Panc1 (cell line): ENCODE measurements at regions of chr1 and their contacts with region 1.

Region 1: GRCh38 chr1:7902478-7903085 is 38.1 kb downstream of the TNFRSF9 start:
- DNase-seq: peak; percentile 66
- ATAC-seq: peak; percentile 97
- H3K4me3 ChIP-seq: peak overlapping the region; percentile 24 to 56
- H3K27ac ChIP-seq: no peak overlapping the region
- H3K4me1 ChIP-seq: no peaks in the 10 kb centered on the region
- H3K27me3 ChIP-seq: no peaks in the 10 kb centered on the region
- CTCF ChIP-seq: peak; percentile 87

Region 2: DNA sequence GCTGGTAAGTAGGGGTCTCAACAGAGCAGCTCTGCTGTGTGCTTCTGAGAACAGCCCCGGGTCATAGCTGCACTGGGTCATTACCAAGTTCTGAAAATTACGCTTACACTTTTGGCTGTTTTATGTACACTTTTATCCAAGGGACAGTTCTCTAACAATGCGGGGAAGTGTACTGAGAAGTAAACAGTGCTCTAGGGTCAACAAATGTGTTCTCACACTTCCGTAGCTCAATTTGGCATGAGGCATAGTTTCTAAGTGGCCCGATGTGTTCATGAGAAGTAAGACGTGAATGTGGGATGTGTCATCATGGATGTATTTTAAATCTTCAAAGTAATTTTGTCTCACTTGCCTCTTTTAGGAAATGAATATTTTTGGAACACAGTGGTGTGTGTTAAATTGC is 142.3 kb before region 1 on chr1:
- CTCF ChIA-PET with region 1: no interaction called
- POLR2A ChIA-PET with region 1: no interaction called
- in situ Hi-C with region 1: no loop called
- intact Hi-C with region 1: no loop called
- DNase-seq: no peak
- ATAC-seq: no peak
- H3K4me3 ChIP-seq: no peak overlapping the region
- H3K27ac ChIP-seq: no peak overlapping the region
- H3K4me1 ChIP-seq: no peaks in the 10 kb centered on the region
- H3K27me3 ChIP-seq: no peaks in the 10 kb centered on the region
- CTCF ChIP-seq: no peak

Region 3: GRCh38 chr1:7808253-7808844 is 94.2 kb before region 1 on chr1:
- CTCF ChIA-PET with region 1: no interaction called
- POLR2A ChIA-PET with region 1: no interaction called
- in situ Hi-C with region 1: no loop called
- intact Hi-C with region 1: loop called (anchors 5 kb)
- DNase-seq: no peak
- ATAC-seq: peak; percentile 81
- H3K4me3 ChIP-seq: no peak overlapping the region
- H3K27ac ChIP-seq: no peak overlapping the region
- H3K4me1 ChIP-seq: no peaks in the 10 kb centered on the region
- H3K27me3 ChIP-seq: no peaks in the 10 kb centered on the region
- CTCF ChIP-seq: peak; percentile 67; the same call in 1 of the 2 replicates

Region 4: GRCh38 chr1:7961216-7962015 is 58.8 kb after region 1 on chr1 and contains the start of gene PARK7:
- CTCF ChIA-PET with region 1: no interaction called
- POLR2A ChIA-PET with region 1: interaction called, 12 read pairs
- in situ Hi-C with region 1: no loop called
- intact Hi-C with region 1: no loop called
- DNase-seq: peak; percentile 97
- ATAC-seq: peak; percentile 98
- H3K4me3 ChIP-seq: peak within 1 kb of the TSS; percentile 87 to 96
- H3K27ac ChIP-seq: peak within 1 kb of the TSS; percentile 99
- H3K4me1 ChIP-seq: peaks cover 19% of the 10 kb centered on the region
- H3K27me3 ChIP-seq: no peaks in the 10 kb centered on the region
- CTCF ChIP-seq: no peak; the same call in 1 of the 2 replicates
- total RNA-seq, gene PARK7: 448 TPM

Region 5: GRCh38 chr1:8259498-8260290 is 357.1 kb after region 1 on chr1:
- CTCF ChIA-PET with region 1: no interaction called
- POLR2A ChIA-PET with region 1: no interaction called
- in situ Hi-C with region 1: no loop called
- intact Hi-C with region 1: no loop called
- DNase-seq: peak; percentile 81
- ATAC-seq: peak; percentile 85
- H3K4me3 ChIP-seq: peak overlapping the region; percentile 4 to 25; a peak in 3 of 4 replicates
- H3K27ac ChIP-seq: peak overlapping the region; percentile 97
- H3K4me1 ChIP-seq: peaks cover 34% of the 10 kb centered on the region
- H3K27me3 ChIP-seq: no peaks in the 10 kb centered on the region
- CTCF ChIP-seq: no peak